Activated naive CD4-positive, alpha-beta T cell treated with anti-CD3 and anti-CD28 coated beads for 36 hours (primary cell): ENCODE measurements at regions of chr6 and their contacts with region 1.

Region 1: GRCh38 chr6:107318100-107318736 is 141.1 kb downstream of the PDSS2 start:
- DNase-seq: peak; percentile 62
- H3K4me3 Mint-ChIP-seq: no peak overlapping the region
- H3K27ac Mint-ChIP-seq: no peak overlapping the region
- H3K4me1 Mint-ChIP-seq: peaks cover 17% of the 10 kb centered on the region
- H3K27me3 Mint-ChIP-seq: no peaks in the 10 kb centered on the region

Region 2: GRCh38 chr6:107330168-107330567 is 11.9 kb after region 1 on chr6:
- CTCF ChIA-PET with region 1: interaction called, 11 read pairs
- intact Hi-C with region 1: no loop called
- DNase-seq: peak; percentile 68
- H3K4me3 Mint-ChIP-seq: peak overlapping the region; percentile 33
- H3K27ac Mint-ChIP-seq: peak overlapping the region; percentile 61
- H3K4me1 Mint-ChIP-seq: peaks cover 13% of the 10 kb centered on the region
- H3K27me3 Mint-ChIP-seq: no peaks in the 10 kb centered on the region

Region 3: GRCh38 chr6:107348224-107348623 is 30.0 kb after region 1 on chr6:
- CTCF ChIA-PET with region 1: no interaction called
- intact Hi-C with region 1: no loop called
- DNase-seq: no peak
- H3K4me3 Mint-ChIP-seq: no peak overlapping the region
- H3K27ac Mint-ChIP-seq: no peak overlapping the region
- H3K4me1 Mint-ChIP-seq: no peaks in the 10 kb centered on the region
- H3K27me3 Mint-ChIP-seq: no peaks in the 10 kb centered on the region

Region 4: DNA sequence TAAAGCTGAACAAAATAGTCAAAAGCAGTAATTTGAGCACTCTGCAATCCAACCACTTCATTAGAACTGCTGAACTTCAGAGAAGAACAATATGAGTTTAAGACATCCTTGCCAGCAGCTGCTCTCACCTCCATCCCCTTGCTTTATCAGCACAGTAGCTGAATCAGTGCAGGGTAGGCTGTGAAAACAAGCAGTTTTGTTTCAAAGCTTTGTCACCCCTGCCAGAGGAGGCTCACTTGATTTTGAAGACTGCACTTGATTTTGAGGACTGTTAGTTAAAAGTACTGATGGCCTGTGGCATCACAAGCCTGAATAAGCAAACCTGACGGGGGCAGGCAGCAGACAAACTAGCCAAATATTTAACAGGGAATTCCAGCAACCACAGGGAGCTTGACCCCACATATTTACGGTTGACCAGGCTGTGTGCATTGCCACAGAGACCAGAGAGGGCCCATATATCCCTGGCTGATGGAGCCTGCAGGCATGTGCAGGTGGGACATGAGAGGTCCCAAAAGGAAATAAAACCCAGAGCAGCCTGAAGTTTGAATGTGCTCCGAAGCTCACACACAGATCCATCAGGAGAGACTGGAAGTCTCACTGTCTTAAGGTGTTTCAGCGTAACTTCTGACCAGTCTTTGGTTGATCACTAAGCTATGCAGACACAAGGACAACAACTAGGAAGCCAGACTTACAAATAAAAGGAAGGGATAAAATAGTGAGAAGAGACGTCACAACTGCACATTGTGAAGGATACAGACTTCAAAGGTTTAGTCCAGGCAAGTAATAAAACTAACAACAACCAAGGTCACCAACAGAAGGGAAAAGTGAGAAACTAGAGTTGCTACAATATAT is 43.8 kb after region 1 on chr6:
- CTCF ChIA-PET with region 1: no interaction called
- intact Hi-C with region 1: no loop called
- DNase-seq: no peak
- H3K4me3 Mint-ChIP-seq: no peak overlapping the region
- H3K27ac Mint-ChIP-seq: no peak overlapping the region
- H3K4me1 Mint-ChIP-seq: no peaks in the 10 kb centered on the region
- H3K27me3 Mint-ChIP-seq: no peaks in the 10 kb centered on the region

Region 5: DNA sequence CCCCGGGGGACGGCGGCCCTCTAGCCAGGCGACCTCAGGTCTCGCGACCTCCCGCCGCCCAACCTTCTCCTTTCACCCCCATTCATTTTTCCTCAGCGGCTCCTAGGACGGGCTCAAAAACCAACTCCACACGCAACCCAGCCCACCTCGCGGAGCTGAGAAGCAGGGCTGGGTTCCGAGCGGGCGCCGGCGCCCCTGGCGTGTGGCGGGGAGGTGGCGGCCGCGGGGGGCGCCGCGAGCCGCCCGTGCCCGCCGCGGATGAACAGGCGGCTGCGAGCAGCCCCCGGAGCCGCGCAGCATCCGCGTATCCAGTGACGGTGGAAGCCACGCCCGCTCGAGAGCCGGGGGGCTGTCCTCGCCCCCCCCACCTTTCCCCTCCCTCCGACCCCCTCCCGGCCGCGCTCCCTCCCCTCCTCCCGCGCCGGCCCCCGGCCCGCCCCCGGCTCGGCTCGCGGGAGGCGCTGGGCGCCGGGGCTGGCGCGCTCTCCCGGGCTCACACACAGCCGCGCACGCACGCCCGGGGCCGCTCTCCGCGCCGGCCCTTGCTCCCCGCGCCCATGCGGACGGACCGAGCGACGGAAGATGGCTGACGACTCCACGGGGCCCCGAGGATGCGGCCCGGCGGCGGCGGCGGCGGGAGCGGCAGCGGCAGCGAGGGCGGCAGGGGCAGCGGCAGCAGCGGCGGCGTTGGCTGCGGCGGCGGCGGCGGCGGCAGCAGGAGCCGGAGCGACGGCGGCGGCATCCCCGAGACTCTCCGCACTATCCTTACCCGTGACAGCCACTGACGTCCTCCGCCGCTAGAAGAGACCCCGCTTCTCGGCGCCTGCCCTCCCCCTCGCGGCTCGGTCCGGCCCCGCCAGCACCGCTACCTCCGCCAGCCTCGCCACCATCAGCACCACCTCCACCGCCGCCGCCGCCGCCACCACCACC is 171.7 kb after region 1 on chr6 and contains the start of gene SOBP:
- CTCF ChIA-PET with region 1: interaction called, 10 read pairs
- intact Hi-C with region 1: loop called (anchors 1 kb)
- DNase-seq: peak; percentile 28
- H3K4me3 Mint-ChIP-seq: peak within 1 kb of the TSS; percentile 80
- H3K27ac Mint-ChIP-seq: no peak within 1 kb of the TSS
- H3K4me1 Mint-ChIP-seq: peaks cover 12% of the 10 kb centered on the region
- H3K27me3 Mint-ChIP-seq: peaks cover 46% of the 10 kb centered on the region
- total RNA-seq, gene SOBP: 0.25 to 0.26 TPM

Region 6: GRCh38 chr6:107657755-107658461 is 339.7 kb after region 1 on chr6:
- CTCF ChIA-PET with region 1: interaction called, 4 read pairs
- intact Hi-C with region 1: loop called (anchors 1 kb)
- DNase-seq: peak; percentile 76
- H3K4me3 Mint-ChIP-seq: no peak overlapping the region
- H3K27ac Mint-ChIP-seq: peak overlapping the region; percentile 9
- H3K4me1 Mint-ChIP-seq: peaks cover 20% of the 10 kb centered on the region
- H3K27me3 Mint-ChIP-seq: peaks cover 3% of the 10 kb centered on the region

Region 7: GRCh38 chr6:107866606-107867301 is 548.5 kb after region 1 on chr6:
- CTCF ChIA-PET with region 1: no interaction called
- intact Hi-C with region 1: loop called (anchors 5 kb)
- DNase-seq: peak; percentile 56
- H3K4me3 Mint-ChIP-seq: no peak overlapping the region
- H3K27ac Mint-ChIP-seq: no peak overlapping the region
- H3K4me1 Mint-ChIP-seq: peaks cover 35% of the 10 kb centered on the region
- H3K27me3 Mint-ChIP-seq: no peaks in the 10 kb centered on the region

Region 8: DNA sequence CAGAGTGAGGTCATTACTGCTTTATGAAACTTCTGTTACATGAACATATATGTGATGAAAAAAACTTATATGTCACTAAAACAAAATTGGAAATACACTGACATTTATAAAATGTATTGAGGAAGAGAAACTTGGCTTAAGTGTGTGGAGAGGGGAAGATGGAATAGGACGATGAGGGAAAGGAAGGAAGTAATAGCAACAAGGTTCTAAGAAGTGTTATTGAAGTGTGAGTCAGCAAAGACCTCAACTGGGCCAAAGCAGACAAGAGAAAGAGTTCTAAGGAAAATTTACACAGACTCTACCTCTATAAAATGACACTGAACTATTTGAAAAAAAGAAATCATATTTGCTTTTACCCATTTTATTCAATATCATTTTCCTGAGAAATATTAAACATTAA is 904.3 kb after region 1 on chr6:
- CTCF ChIA-PET with region 1: no interaction called
- intact Hi-C with region 1: no loop called
- DNase-seq: no peak
- H3K4me3 Mint-ChIP-seq: no peak overlapping the region
- H3K27ac Mint-ChIP-seq: no peak overlapping the region
- H3K4me1 Mint-ChIP-seq: peaks cover 8% of the 10 kb centered on the region
- H3K27me3 Mint-ChIP-seq: no peaks in the 10 kb centered on the region